OCI-LY7 (cell line): ENCODE measurements at regions of chr2 and their contacts with region 1.

Region 1: GRCh38 chr2:62774555-62775366 is 69.2 kb downstream of the EHBP1 start:
- DNase-seq: peak; percentile 47
- H3K4me3 ChIP-seq: no peak overlapping the region
- H3K27ac ChIP-seq: no peak overlapping the region
- H3K4me1 ChIP-seq: no peaks in the 10 kb centered on the region
- CTCF ChIP-seq: peak; percentile 91

Region 2: GRCh38 chr2:62456721-62457539 is 317.8 kb before region 1 on chr2:
- CTCF ChIA-PET with region 1: interaction called, 4 read pairs
- POLR2A ChIA-PET with region 1: no interaction called
- intact Hi-C with region 1: loop called (anchors 1 kb)
- DNase-seq: peak; percentile 41
- H3K4me3 ChIP-seq: no peak overlapping the region
- H3K27ac ChIP-seq: no peak overlapping the region
- H3K4me1 ChIP-seq: no peaks in the 10 kb centered on the region
- CTCF ChIP-seq: peak; percentile 84

Region 3: GRCh38 chr2:62858356-62858755 is 83.6 kb after region 1 on chr2:
- CTCF ChIA-PET with region 1: no interaction called
- POLR2A ChIA-PET with region 1: no interaction called
- intact Hi-C with region 1: no loop called
- DNase-seq: no peak
- H3K4me3 ChIP-seq: no peak overlapping the region
- H3K27ac ChIP-seq: no peak overlapping the region
- H3K4me1 ChIP-seq: no peaks in the 10 kb centered on the region
- CTCF ChIP-seq: no peak